OCI-LY7 (cell line): ENCODE measurements at regions of chr16 and their contacts with region 1.

Region 1: GRCh38 chr16:84617791-84618580 is at the start of gene COTL1:
- DNase-seq: peak; percentile 97
- H3K4me3 ChIP-seq: peak within 1 kb of the TSS; percentile 99
- H3K27ac ChIP-seq: peak within 1 kb of the TSS; percentile 52
- H3K4me1 ChIP-seq: peaks cover 67% of the 10 kb centered on the region
- CTCF ChIP-seq: no peak
- total RNA-seq, gene COTL1: 119 and 125 TPM in 2 replicates

Region 2: DNA sequence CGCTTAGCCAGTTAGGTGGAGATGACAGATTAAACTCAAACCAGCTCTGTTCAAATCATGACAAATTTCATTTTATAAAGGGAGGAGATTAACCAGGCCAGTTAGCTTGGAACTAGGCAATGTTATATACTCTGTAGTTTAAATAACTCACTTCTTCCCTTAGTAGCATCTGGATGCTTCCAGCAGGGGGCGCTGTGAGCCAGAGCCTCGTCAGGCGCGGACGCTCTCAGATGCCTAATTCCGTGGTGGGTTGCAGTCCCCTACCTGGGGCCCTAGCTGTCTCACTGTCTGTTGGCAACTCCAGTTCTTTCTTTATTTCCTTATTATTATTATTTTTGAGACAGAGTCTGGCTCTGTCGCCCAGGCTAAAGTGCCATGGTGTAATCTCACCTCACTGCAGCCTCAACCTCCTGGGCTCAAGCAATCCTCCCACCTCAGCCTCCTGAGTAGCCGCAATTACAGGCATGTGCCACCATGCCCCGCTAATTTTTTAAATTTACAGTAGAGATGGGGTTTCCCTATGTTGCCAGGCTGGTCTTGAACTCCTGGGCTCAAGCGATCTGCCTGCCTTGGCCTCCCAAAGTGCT is 340.7 kb before region 1 on chr16:
- CTCF ChIA-PET with region 1: no interaction called
- POLR2A ChIA-PET with region 1: no interaction called
- intact Hi-C with region 1: loop called (anchors 5 kb)
- DNase-seq: peak; percentile 67
- H3K4me3 ChIP-seq: no peak overlapping the region
- H3K27ac ChIP-seq: no peak overlapping the region
- H3K4me1 ChIP-seq: no peaks in the 10 kb centered on the region
- CTCF ChIP-seq: peak; percentile 93

Region 3: DNA sequence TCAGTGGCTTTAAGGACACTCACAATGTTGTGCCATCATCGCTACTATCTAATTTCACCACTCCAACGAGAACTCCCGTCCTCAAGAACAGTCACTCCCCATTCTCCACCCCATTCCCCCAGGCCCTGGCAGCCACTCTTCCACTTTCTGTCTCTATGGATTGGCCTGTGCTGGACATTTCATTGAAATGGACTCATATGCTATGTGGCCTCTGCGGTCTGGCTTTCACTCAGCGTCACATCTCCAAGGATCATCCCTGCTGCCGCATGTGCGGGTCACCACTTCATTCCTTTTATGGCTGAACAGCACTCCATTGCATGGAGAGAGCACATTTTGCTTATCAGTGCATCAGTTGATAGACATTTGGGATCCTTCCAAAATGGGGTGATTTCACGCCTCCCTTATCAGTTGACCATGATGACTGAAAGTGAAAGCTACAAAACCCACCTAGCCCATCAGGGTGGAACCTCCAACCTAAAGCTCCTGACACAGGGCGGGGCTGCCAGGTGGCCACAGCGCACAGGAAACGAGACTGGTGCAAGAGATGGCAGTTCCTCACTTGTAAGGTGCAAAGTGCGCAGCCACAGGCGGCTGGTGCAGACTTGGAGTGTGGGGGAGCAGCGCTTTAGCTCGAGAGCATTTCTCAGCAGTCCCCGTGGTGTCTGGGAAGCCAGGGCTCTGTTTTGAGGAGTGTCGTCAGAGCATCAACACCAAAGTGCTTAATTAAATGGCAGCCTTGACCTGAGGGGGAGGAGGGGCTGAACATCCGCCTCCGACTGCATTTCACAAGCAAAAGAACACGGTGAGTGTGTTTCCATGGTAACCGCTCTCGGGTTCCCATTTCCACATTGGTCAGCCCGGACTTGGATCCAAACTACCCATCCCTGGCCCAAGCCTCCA is 23.9 kb before region 1 on chr16:
- CTCF ChIA-PET with region 1: no interaction called
- POLR2A ChIA-PET with region 1: interaction called, 50 read pairs
- intact Hi-C with region 1: loop called (anchors 1 kb)
- DNase-seq: peak; percentile 97
- H3K4me3 ChIP-seq: peak overlapping the region; percentile 71
- H3K27ac ChIP-seq: peak overlapping the region; percentile 97
- H3K4me1 ChIP-seq: peaks cover 69% of the 10 kb centered on the region
- CTCF ChIP-seq: no peak

Region 4: DNA sequence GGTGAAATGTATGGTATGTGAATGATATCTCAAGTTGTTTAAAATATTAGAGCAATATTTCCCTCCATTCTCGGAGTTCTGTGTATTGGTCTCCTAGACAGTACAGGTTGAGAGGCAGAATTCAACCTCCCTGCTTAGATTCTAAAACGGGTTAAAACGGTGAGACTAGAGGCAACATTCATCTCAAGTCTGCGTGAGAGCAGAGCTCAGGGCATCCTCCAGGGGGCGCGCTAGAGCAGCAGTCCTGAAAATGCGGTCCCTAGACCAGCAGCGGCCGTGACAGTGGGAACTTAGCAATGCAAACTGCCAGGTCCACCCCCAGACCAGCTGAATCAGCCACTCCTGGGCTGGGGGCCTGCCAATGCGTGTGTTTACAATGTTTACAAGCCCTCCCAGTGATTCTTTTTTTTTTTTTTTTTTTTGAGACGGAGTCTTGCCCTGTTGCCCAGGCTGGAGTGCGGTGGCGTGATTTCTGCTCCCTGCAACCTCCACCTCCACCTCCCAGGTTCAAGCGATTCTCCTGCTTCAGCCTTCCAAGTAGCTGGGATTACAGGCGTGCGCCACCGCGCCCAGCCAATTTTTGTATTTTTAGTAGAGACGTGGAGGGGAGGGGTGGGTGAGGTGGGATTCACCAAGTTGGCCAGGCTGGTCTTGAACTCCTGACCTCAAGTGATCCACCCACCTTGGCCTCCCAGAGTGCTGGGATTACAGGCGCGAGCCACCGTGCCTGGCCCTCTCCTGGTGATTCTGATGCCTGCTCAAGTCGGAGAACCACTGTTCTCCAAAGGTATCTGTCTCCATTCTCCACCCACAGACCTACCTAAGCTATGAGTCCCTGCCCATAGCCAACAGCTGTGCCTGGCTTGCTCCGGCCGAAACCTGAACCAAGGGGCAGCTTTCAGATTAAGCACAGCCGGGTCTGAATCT is 54.6 kb after region 1 on chr16:
- CTCF ChIA-PET with region 1: no interaction called
- POLR2A ChIA-PET with region 1: no interaction called
- intact Hi-C with region 1: loop called (anchors 2 kb)
- DNase-seq: peak; percentile 81
- H3K4me3 ChIP-seq: no peak overlapping the region
- H3K27ac ChIP-seq: no peak overlapping the region
- H3K4me1 ChIP-seq: peaks cover 9% of the 10 kb centered on the region
- CTCF ChIP-seq: peak; percentile 97

Region 5: DNA sequence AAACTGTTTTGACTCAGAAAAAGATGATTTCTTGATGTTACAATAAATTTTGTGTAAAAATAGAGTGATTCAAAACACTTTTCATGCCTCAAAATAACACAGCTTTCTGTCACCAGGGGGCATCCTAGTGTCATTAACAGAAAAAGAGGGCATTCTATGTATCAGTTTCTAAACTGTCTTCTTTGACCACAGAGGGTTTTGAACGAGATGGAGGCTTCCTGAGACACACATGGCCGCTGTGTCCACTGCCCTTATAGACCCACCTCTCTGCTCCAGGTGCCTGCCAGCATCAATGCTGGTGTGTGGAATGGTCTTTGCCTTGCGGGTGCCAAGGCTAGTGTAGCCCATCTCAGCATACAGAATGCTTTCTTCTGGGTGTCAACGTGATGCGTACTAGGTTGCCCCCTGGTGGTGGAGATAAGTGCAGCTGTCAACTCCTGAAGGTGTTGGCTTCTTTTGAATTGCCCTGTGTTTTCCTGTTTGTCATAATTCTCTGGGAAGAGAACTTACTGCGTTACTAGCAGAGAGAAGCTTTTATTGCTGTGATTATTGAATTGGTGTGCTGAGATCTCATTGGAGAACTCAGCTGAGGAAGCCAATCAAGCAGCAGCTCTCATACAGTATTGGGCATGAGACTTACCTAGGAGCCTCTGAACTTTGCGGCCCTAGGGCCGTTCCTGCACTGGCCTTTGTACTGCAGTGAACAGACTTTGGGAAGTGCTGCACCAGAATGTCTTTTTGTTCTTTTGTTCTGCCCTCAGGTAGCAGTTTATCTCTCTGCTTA is 120.5 kb after region 1 on chr16:
- CTCF ChIA-PET with region 1: interaction called, 5 read pairs
- POLR2A ChIA-PET with region 1: interaction called, 6 read pairs
- intact Hi-C with region 1: loop called (anchors 1 kb)
- DNase-seq: peak; percentile 88
- H3K4me3 ChIP-seq: no peak overlapping the region
- H3K27ac ChIP-seq: no peak overlapping the region
- H3K4me1 ChIP-seq: peaks cover 22% of the 10 kb centered on the region
- CTCF ChIP-seq: peak; percentile 99

Region 6: GRCh38 chr16:84806256-84806889 is 188.4 kb after region 1 on chr16:
- CTCF ChIA-PET with region 1: no interaction called
- POLR2A ChIA-PET with region 1: no interaction called
- intact Hi-C with region 1: no loop called
- DNase-seq: no peak
- H3K4me3 ChIP-seq: no peak overlapping the region
- H3K27ac ChIP-seq: no peak overlapping the region
- H3K4me1 ChIP-seq: no peaks in the 10 kb centered on the region
- CTCF ChIP-seq: no peak

Region 7: DNA sequence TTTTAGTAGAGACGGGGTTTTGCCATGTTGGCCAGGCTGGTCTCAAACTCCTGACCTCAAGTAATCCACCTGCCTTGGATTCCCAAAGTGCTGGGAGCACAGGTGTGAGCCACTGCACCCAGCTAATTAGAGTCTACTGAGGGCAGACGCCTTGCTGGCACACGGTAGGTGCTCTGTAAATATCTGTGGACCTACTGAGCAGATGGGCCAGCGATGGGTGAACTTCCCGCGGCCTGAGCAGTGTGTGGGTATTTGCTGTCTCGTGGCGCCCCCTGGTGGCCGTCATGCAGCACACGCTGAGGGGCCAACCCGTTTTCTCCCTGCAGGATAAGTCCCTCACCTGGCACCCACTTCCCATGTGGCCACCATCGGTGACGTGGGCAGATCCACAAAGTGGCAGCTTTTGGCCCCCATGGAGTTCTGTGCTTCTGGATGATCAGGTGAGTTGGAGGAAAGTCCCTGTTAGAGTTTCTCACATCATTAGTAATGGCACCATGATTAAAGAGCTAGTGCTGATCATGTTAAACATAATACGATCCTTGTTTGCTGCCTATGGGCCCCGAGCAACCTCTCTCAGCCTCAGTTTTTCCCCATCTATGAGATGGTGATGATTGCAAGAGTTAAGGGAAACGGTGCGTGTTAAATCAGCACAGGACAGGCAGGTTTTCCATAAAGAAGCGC is 352.6 kb after region 1 on chr16:
- CTCF ChIA-PET with region 1: no interaction called
- POLR2A ChIA-PET with region 1: no interaction called
- intact Hi-C with region 1: loop called (anchors 5 kb)
- DNase-seq: peak; percentile 82
- H3K4me3 ChIP-seq: no peak overlapping the region
- H3K27ac ChIP-seq: no peak overlapping the region
- H3K4me1 ChIP-seq: no peaks in the 10 kb centered on the region
- CTCF ChIP-seq: peak; percentile 96